CD14-positive monocyte (primary cell): ENCODE measurements at regions of chr12 and their contacts with region 1.

Region 1: DNA sequence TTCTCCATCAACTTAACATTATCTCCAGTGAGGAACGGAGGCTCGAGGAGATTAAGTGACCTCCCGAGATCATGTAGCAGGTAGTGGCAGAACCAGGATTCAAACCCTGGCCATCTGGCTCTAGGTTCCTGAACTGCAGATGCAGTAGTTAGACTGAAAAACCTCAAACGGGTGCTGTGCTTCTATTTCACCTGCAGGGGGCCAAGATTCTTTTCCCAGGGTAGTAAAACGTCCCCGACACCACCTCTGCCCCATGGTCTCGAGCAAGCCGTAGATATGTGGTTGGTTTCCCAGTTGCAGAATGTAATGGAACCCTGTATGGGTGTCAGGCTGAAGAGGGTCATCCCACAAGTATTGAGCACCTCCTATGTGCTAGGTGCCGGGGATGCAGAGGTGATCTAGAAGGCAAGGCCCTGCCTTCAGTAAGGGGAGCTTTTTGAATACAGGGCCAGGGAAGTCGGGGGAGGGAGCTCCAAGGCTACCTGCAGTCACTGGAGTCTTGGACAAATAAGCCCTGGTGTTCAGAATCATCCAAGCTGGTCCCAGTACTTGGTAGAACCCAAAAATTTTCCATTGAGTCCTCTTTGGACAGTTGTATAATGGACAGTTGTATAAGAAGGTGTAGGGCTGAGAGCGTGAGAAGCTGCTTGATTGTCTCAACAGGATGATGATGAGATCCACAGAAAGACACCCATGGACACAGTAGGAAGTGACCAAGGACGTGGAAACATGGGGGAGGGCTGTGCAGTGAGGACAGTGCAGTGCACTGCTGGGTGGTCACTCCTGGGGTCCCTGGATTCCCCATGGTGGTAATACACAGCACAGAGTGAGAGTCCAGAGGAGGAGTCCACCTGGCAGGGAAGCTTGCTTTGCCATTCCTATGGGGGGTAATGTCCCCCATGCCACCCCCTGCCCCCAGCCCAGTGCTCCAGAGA is 197.2 kb downstream of the CHST11 start:
- DNase-seq: peak in 1 of 3 donors; percentile 19
- H3K4me3 ChIP-seq: no peak overlapping the region
- H3K4me3 Mint-ChIP-seq: no peak overlapping the region
- H3K27ac ChIP-seq: peak overlapping the region in 1 of 2 donors; percentile 97
- H3K27ac Mint-ChIP-seq: peak overlapping the region; percentile 69 to 99 (median 88)
- H3K4me1 ChIP-seq: peaks cover 65 to 72% of the 10 kb centered on the region in 2 donors
- H3K4me1 Mint-ChIP-seq: peaks cover 85% of the 10 kb centered on the region
- H3K27me3 ChIP-seq: no peaks in the 10 kb centered on the region
- H3K27me3 Mint-ChIP-seq: no peaks in the 10 kb centered on the region
- CTCF ChIP-seq: peak; percentile 44

Region 2: GRCh38 chr12:104507672-104508071 is 146.3 kb before region 1 on chr12:
- intact Hi-C with region 1: no loop called
- DNase-seq: no peak
- H3K4me3 ChIP-seq: no peak overlapping the region
- H3K4me3 Mint-ChIP-seq: no peak overlapping the region
- H3K27ac ChIP-seq: peak overlapping the region in 1 of 2 donors; percentile 49
- H3K27ac Mint-ChIP-seq: peak overlapping the region in 1 of 7 donors; percentile 80
- H3K4me1 ChIP-seq: peaks cover 22 to 24% of the 10 kb centered on the region in 2 donors
- H3K4me1 Mint-ChIP-seq: peaks cover 70% of the 10 kb centered on the region
- H3K27me3 ChIP-seq: no peaks in the 10 kb centered on the region
- H3K27me3 Mint-ChIP-seq: peaks cover 0 to 3% (median 0%) of the 10 kb centered on the region in 3 donors
- CTCF ChIP-seq: no peak

Region 3: DNA sequence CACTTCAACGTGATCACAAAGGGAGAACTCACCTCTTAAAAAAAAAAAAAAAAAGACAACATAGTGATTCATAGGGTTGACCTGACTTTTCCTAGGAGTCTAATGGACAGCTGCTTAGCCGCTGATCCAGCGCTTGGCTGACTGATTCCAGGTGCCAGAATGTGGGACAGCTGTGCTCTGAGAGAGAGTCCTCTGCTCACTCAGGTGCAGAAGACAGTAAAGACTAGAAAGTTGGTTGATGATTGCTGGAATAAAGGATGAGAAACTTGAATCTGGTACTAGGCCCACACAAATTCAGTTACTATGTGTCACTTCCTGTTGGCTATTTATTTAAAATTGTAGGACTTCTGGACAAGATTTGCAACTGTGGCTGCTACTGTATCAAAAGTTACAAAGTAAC is 32.2 kb after region 1 on chr12:
- intact Hi-C with region 1: loop called (anchors 2 to 5 kb)
- DNase-seq: peak in 2 of 3 donors; percentile 18 to 37
- H3K4me3 ChIP-seq: no peak overlapping the region
- H3K4me3 Mint-ChIP-seq: no peak overlapping the region
- H3K27ac ChIP-seq: peak overlapping the region; percentile 15 to 83
- H3K27ac Mint-ChIP-seq: peak overlapping the region; percentile 83 to 96 (median 92)
- H3K4me1 ChIP-seq: peaks cover 96 to 100% of the 10 kb centered on the region in 2 donors
- H3K4me1 Mint-ChIP-seq: peaks cover 96% of the 10 kb centered on the region
- H3K27me3 ChIP-seq: no peaks in the 10 kb centered on the region
- H3K27me3 Mint-ChIP-seq: no peaks in the 10 kb centered on the region
- CTCF ChIP-seq: no peak

Region 4: GRCh38 chr12:104697186-104697585 is 43.2 kb after region 1 on chr12:
- intact Hi-C with region 1: no loop called
- DNase-seq: no peak
- H3K4me3 ChIP-seq: no peak overlapping the region
- H3K4me3 Mint-ChIP-seq: no peak overlapping the region
- H3K27ac ChIP-seq: no peak overlapping the region
- H3K27ac Mint-ChIP-seq: peak overlapping the region in 2 of 7 donors; percentile 2 to 21
- H3K4me1 ChIP-seq: peaks cover 30 to 39% of the 10 kb centered on the region in 2 donors
- H3K4me1 Mint-ChIP-seq: peaks cover 51% of the 10 kb centered on the region
- H3K27me3 ChIP-seq: no peaks in the 10 kb centered on the region
- H3K27me3 Mint-ChIP-seq: peaks cover 0 to 2% (median 0%) of the 10 kb centered on the region in 3 donors
- CTCF ChIP-seq: no peak

Region 5: DNA sequence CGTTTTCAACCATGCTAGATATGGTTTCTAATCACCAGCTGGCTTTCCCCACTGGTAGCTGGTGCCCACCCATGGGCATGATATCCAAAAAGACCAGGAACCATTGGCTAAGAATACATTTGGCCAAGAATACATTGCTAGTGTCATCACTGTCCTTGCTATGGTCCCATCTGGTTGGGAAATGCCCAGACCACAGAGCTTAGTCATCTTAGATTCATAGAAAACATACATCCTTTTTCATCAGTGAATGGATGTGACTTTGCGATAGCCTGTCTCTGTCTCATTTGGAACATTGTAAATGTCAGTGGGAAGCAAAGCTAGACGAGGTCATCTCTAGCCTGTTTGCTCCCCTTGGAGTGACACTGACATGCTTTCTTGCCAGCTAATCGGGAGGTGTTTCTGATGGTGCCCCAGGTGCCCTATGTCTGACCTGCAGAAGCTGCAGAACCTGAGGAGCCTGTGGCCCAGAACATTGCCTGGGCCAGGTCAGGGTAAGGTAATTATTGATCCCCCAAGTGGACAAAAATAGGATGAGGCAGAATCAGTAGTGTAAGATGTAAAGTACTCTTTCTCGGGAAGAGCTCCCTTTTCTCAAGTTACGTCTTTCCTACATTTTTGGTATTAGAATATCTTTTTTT is 109.3 kb after region 1 on chr12:
- intact Hi-C with region 1: no loop called
- DNase-seq: peak; percentile 75 to 91 (median 89)
- H3K4me3 ChIP-seq: no peak overlapping the region
- H3K4me3 Mint-ChIP-seq: peak overlapping the region in 1 of 2 donors; percentile 75
- H3K27ac ChIP-seq: no peak overlapping the region
- H3K27ac Mint-ChIP-seq: peak overlapping the region; percentile 29 to 90 (median 81)
- H3K4me1 ChIP-seq: peaks cover 26 to 30% of the 10 kb centered on the region in 2 donors
- H3K4me1 Mint-ChIP-seq: peaks cover 40% of the 10 kb centered on the region
- H3K27me3 ChIP-seq: no peaks in the 10 kb centered on the region
- H3K27me3 Mint-ChIP-seq: peaks cover 5 to 13% (median 7%) of the 10 kb centered on the region in 3 donors
- CTCF ChIP-seq: no peak